ENCODE measurements at regions of chr5 and their contacts with region 1.

Region 1: DNA sequence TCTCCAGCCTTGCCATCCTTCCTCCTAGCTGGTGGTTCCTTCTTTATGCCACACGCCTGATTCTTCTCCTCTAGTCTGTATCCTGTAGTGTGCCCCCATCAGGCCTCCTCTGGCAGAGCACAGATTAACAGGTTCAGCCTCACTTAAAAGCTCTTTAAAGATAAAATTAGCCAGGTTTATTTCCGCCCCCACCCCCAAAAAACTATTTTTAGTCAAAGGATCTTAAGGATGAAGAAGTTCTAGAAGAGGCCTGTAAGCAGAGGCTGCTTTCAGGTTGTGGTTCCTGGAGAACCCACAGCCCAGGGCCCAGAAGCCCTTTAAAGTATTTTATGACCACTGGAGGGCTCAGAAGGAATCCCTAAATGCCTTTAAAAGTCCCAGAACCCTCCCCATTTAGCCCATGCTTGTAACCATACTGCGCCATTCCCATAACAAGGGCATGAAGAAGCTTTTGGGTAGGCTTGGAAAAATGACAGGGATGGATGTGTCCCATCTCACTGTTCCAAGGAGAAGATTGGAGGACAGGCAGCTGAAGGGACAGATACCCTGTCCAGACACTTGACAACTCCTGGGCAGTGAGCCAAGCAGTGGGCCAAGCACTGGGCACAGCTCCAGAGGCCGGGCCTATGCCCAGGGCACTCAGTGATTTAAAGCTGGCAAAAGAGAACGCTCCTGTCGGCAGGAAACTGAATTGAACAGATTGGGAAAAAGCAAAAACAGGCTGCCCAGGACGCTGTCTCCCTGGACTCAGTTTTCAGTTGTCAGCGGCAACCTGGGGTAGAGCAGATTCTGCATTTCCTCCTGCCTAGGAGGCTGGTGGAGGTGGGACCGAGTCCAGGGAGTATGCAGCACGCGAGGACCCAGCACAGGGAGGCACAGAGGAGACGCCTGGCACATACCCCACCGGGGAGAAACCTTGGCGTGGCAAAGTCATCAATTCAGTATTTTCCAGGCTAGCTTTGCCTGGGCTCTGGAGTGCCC is 106.3 kb upstream of the SSBP2 start:
- DNase-seq: peak; percentile 93
- H3K4me3 Mint-ChIP-seq: peak overlapping the region; percentile 65
- H3K27ac Mint-ChIP-seq: peak overlapping the region; percentile 96
- H3K4me1 Mint-ChIP-seq: peaks cover 34% of the 10 kb centered on the region
- H3K27me3 Mint-ChIP-seq: no peaks in the 10 kb centered on the region
- CTCF ChIP-seq: peak; percentile 5

Region 2: GRCh38 chr5:81895307-81895706 is 38.1 kb after region 1 on chr5:
- CTCF ChIA-PET with region 1: interaction called, 3 read pairs
- POLR2A ChIA-PET with region 1: interaction called, 12 read pairs
- intact Hi-C with region 1: no loop called
- DNase-seq: no peak
- H3K4me3 Mint-ChIP-seq: no peak overlapping the region
- H3K27ac Mint-ChIP-seq: no peak overlapping the region
- H3K4me1 Mint-ChIP-seq: peaks cover 7% of the 10 kb centered on the region
- H3K27me3 Mint-ChIP-seq: no peaks in the 10 kb centered on the region
- CTCF ChIP-seq: no peak

Region 3: GRCh38 chr5:81971712-81972495 is 114.7 kb after region 1 on chr5 and contains the start of gene ATG10:
- CTCF ChIA-PET with region 1: interaction called, 5 read pairs
- POLR2A ChIA-PET with region 1: interaction called, 23 read pairs
- intact Hi-C with region 1: loop called (anchors 2 kb)
- DNase-seq: peak; percentile 86
- H3K4me3 Mint-ChIP-seq: peak within 1 kb of the TSS; percentile 95
- H3K27ac Mint-ChIP-seq: peak within 1 kb of the TSS; percentile 96
- H3K4me1 Mint-ChIP-seq: peaks cover 19% of the 10 kb centered on the region
- H3K27me3 Mint-ChIP-seq: no peaks in the 10 kb centered on the region
- CTCF ChIP-seq: no peak
- total RNA-seq, gene ATG10: 9.9 and 11.1 TPM in 2 replicates